Activated naive CD4-positive, alpha-beta T cell treated with anti-CD3 and anti-CD28 coated beads, Interleukin-2, amount 10 ng/mL, durations not matched to agents 7 days and 5 days (primary cell): ENCODE measurements at regions of chr10 and their contacts with region 1.

Region 1: DNA sequence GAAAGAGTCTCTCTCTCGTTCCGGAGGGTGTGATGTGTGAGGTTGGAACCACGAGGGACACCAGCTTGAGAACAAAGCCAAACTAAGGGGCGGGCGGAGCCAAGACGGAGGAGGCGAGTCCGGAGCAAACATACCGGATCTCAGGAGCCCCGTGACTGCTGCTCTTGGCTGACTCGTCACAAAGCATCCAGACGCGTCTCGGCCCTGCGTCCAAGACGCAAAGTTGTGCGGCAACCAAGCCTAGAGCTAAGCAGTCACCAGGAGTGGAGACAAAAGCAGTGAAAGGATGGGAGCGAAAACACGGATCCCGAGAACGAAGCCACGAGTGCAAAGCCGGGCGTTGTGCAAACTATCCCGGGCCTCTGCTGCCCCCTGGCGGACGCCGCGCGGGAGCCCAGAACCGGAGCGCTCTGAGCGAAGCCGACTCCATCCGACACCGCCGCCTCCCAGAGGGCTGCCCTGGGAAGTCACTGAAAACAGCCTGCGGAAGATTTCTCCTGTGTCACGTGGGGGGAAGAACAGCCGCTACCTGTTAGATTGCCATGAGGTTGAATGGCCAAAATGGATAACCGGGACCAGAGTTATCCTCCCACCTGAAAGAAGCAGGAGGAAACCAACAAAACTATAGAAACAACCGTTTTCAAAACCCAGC is 46.4 kb upstream of the TMEM72 start:
- DNase-seq: peak; percentile 84
- H3K4me3 Mint-ChIP-seq: peak overlapping the region; percentile 79
- H3K27ac Mint-ChIP-seq: no peak overlapping the region
- H3K4me1 Mint-ChIP-seq: peaks cover 8% of the 10 kb centered on the region
- H3K27me3 Mint-ChIP-seq: peaks cover 54% of the 10 kb centered on the region

Region 2: GRCh38 chr10:44853148-44853734 is 11.5 kb before region 1 on chr10:
- CTCF ChIA-PET with region 1: interaction called, 11 read pairs
- DNase-seq: no peak
- H3K4me3 Mint-ChIP-seq: no peak overlapping the region
- H3K27ac Mint-ChIP-seq: no peak overlapping the region
- H3K4me1 Mint-ChIP-seq: no peaks in the 10 kb centered on the region
- H3K27me3 Mint-ChIP-seq: no peaks in the 10 kb centered on the region

Region 3: GRCh38 chr10:44902941-44903545 is 38.3 kb after region 1 on chr10:
- CTCF ChIA-PET with region 1: no interaction called
- DNase-seq: no peak
- H3K4me3 Mint-ChIP-seq: no peak overlapping the region
- H3K27ac Mint-ChIP-seq: no peak overlapping the region
- H3K4me1 Mint-ChIP-seq: no peaks in the 10 kb centered on the region
- H3K27me3 Mint-ChIP-seq: peaks cover 23% of the 10 kb centered on the region

Region 4: GRCh38 chr10:45008524-45009161 is 143.9 kb after region 1 on chr10:
- CTCF ChIA-PET with region 1: no interaction called
- DNase-seq: peak; percentile 28
- H3K4me3 Mint-ChIP-seq: no peak overlapping the region
- H3K27ac Mint-ChIP-seq: no peak overlapping the region
- H3K4me1 Mint-ChIP-seq: peaks cover 3% of the 10 kb centered on the region
- H3K27me3 Mint-ChIP-seq: peaks cover 11% of the 10 kb centered on the region

Region 5: DNA sequence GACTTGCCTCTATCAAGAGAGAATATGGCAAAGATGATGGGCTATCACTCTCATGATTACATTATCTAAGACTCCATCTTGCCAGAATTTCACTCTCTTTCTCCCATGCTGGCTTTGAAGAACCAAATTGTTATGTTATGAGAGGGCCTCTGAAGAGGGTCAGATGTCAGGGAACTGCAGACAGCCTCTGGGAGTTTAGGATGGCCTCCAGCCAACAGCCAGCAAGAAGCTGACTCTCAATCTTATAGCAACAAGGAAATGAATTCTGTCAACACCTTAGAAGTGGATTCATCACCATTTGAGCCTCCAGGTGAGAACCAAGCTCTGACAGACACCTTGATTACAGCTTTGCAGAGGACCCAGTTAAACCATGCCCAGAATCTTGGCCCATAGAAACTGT is 169.5 kb after region 1 on chr10:
- CTCF ChIA-PET with region 1: no interaction called
- DNase-seq: no peak
- H3K4me3 Mint-ChIP-seq: no peak overlapping the region
- H3K27ac Mint-ChIP-seq: no peak overlapping the region
- H3K4me1 Mint-ChIP-seq: no peaks in the 10 kb centered on the region
- H3K27me3 Mint-ChIP-seq: peaks cover 5% of the 10 kb centered on the region